Right ventricle myocardium inferior (tissue), 1 donor: ENCODE measurements at regions of chr5 and their contacts with region 1.

Region 1: GRCh38 chr5:89729623-89730301 is 679.8 kb downstream of the CETN3 start:
- DNase-seq: no peak
- ATAC-seq: no peak

Region 2: GRCh38 chr5:89374144-89374784 is 355.5 kb before region 1 on chr5:
- intact Hi-C with region 1: no loop called
- DNase-seq: no peak
- ATAC-seq: no peak

Region 3: DNA sequence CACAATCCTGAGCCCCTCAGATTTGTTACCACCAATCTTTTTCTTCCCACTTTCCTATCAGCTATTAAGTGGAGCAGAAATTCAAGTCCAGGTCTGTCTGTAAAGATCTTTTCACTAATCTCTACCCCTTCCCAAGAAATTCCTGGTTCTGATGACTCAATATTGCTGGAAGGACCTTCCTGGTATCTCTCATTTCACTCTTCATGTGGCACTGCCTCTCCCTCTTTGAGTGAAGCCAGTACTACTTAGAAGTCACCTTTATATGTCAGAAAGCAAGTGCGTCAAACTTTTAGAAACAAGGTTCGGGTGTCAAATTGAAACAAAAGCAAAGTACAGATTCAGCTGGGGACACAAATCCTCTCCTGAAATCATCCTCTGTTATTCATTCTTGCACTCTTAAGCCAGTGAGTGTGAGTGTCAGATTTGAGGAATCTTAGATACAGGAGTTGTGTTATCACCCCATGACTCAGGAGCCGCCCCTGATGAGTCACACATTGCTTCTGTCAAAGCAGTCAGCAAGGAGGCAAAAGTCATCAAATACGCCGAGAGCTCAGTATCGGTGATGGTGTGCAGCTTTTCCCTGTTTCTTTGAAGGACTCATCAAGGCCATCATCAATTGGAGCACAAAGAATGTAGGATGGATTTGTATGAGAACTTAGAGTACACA is 366.8 kb after region 1 on chr5:
- intact Hi-C with region 1: loop called (anchors 5 kb)
- DNase-seq: peak; percentile 59
- ATAC-seq: no peak